Posterior cingulate gyrus (tissue), 11 donors: ENCODE measurements at regions of chr15 and their contacts with region 1.

Region 1: GRCh38 chr15:57654153-57654852 is 52.2 kb upstream of the POLR2M start:
- DNase-seq: no peak

Region 2: DNA sequence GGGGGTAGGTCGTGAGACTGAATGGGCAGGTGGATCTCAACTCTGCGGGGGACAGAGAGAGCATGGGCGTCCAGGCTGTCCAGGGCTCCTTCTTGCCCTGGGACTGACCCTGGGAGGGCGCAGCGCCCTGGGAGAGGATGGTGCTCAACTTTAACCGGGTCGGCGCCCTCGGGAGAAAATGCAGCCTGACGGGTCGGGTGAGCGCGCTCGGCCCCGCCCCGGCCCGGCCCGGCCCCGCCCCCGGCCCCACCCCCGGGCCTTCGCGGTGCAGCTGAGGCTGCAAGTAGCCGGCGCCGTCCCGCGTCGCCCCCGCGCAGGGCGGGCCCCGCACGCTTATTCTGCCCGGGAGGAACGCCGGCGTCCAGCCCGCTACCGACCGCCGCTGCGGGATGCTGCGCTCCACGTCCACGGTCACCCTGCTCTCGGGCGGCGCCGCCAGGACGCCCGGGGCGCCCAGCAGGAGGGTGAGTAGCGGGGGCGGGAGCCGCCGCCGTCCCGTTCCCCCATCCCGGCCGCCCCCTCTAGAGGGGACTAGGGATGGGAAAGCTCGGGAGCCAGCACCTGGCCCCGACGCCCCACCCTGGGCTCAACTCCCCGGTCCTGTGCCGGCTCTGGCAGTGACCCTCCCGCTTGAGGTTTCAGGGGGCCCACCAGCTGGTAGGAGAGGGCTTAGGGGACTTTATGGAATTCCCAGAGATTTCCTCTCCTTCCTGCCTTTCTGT is 62.5 kb before region 1 on chr15 and contains the start of gene MYZAP:
- intact Hi-C with region 1: no loop called
- DNase-seq: peak in 3 of 10 donors; percentile 10 to 87 (median 46)

Region 3: GRCh38 chr15:57706405-57707209 is 52.3 kb after region 1 on chr15 and contains the start of gene POLR2M:
- intact Hi-C with region 1: loop called (anchors 5 kb)
- DNase-seq: peak; percentile 88 to 99 (median 92)

Region 4: GRCh38 chr15:57743424-57743823 is 89.1 kb after region 1 on chr15:
- intact Hi-C with region 1: loop called (anchors 10 kb)
- DNase-seq: no peak

Region 5: DNA sequence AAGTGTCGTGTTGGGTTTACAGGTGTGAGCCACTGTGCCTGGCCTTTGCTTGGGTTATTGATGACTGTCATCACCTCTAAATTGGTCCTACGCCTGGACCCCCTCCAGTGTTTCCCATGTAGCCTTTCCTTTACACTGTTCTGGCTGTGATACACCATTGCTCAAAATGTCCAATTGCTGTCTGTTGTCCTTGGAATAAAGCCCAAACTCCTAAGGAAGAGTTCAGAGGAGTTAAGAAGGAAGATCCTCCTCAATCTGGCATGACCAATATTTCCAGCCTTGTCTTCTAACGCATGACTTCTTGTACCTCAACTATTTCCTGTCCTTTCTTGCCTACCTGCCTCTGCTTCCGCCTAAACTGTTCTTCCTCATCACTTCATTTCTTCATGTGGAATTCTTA is 165.3 kb after region 1 on chr15:
- intact Hi-C with region 1: no loop called
- DNase-seq: no peak